ENCODE measurements at regions of chr1 and their contacts with region 1.

Region 1: GRCh38 chr1:28860332-28861073 is 48.5 kb downstream of the OPRD1 start:
- DNase-seq: no peak
- H3K4me3 ChIP-seq: no peak overlapping the region
- H3K27ac ChIP-seq: no peak overlapping the region
- H3K4me1 ChIP-seq: no peaks in the 10 kb centered on the region
- H3K27me3 ChIP-seq: peaks cover 0 to 22% (median 0%) of the 10 kb centered on the region in 4 donors
- CTCF ChIP-seq: no peak
- POLR2A ChIP-seq: no peak

Region 2: GRCh38 chr1:28718586-28719331 is 141.7 kb before region 1 on chr1:
- intact Hi-C with region 1: no loop called
- DNase-seq: no peak
- H3K4me3 ChIP-seq: no peak overlapping the region
- H3K27ac ChIP-seq: no peak overlapping the region
- H3K4me1 ChIP-seq: peaks cover 0 to 8% (median 0%) of the 10 kb centered on the region in 3 donors
- H3K27me3 ChIP-seq: no peaks in the 10 kb centered on the region
- CTCF ChIP-seq: no peak
- POLR2A ChIP-seq: no peak

Region 3: GRCh38 chr1:28789412-28789811 is 71.1 kb before region 1 on chr1:
- intact Hi-C with region 1: loop called (anchors 5 kb)
- DNase-seq: no peak
- H3K4me3 ChIP-seq: no peak overlapping the region
- H3K27ac ChIP-seq: no peak overlapping the region
- H3K4me1 ChIP-seq: peaks cover 0 to 7% (median 0%) of the 10 kb centered on the region in 3 donors
- H3K27me3 ChIP-seq: no peaks in the 10 kb centered on the region
- CTCF ChIP-seq: no peak
- POLR2A ChIP-seq: no peak

Region 4: GRCh38 chr1:29033829-29034466 is 173.4 kb after region 1 on chr1:
- intact Hi-C with region 1: no loop called
- DNase-seq: no peak
- H3K4me3 ChIP-seq: no peak overlapping the region
- H3K27ac ChIP-seq: no peak overlapping the region
- H3K4me1 ChIP-seq: no peaks in the 10 kb centered on the region
- H3K27me3 ChIP-seq: no peaks in the 10 kb centered on the region
- CTCF ChIP-seq: peak; percentile 44 to 83 (median 68)
- POLR2A ChIP-seq: no peak

Measured in esophagus squamous epithelium (tissue), 5 donors.